ENCODE measurements at regions of chr19 and their contacts with region 1.

Region 1: DNA sequence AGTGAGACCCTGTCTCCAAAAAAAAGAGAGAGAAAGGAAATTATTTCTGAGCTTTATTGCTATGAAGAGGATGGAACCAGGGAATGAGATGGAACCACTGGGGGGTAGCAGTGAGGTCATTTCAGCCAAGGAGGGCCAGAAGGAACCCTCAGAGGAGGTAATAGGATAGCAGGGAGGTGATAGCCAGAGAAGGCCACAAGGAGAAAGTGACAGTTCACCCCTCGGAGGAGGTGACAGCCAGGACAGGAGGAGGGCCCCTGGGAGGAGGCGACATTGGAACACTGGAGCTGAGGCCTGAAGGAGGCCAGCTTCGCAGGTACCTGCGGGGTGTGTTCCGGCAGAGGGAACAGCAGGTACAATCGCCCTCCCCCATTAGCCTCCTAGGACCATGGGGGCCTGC is 675 bp upstream of the PGPEP1 start:
- DNase-seq: no peak
- ATAC-seq: no peak
- H3K4me3 ChIP-seq: no peak overlapping the region
- H3K27ac ChIP-seq: no peak overlapping the region
- H3K4me1 ChIP-seq: no peaks in the 10 kb centered on the region
- H3K27me3 ChIP-seq: no peaks in the 10 kb centered on the region

Region 2: DNA sequence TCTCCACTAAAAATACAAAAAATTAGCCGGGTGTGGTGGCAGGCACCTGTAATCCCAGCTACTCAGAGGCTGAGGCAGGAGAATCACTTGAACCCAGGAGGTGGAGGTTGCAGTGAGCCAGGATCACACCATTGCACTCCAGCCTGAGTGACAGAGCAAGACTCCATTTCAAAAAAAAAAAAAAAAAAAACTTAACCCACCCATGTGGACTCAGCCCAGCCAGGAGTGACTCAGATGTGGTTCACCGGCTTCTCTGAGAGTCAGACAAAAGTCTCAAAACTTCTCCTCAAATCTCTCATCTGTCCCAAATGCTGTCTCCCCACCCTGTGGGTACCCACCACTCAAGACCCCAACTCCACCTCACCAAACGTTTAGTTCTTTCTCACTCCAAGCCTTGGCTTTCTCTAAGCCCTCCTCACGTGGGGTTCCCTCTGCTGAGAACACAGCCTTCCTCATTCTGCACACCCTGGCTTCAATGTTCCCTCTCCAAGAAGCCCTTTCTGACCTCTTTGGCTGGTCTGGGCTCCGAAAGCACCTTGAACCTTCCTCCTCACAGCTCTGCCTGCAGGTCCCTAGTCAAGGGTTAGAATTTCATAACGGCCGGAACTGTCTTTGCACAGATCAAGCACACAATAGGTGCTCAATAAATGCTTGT is 124.8 kb before region 1 on chr19:
- intact Hi-C with region 1: loop called in 1 of 2 experiments (anchors 10 kb)
- DNase-seq: no peak
- ATAC-seq: no peak
- H3K4me3 ChIP-seq: no peak overlapping the region
- H3K27ac ChIP-seq: no peak overlapping the region
- H3K4me1 ChIP-seq: no peaks in the 10 kb centered on the region
- H3K27me3 ChIP-seq: no peaks in the 10 kb centered on the region

Measured in aorta (tissue), 5 donors.